Activated CD8-positive, alpha-beta T cell treated with anti-CD3 and anti-CD28 coated beads, Interleukin-2, amount 10 ng/mL, durations not matched to agents 7 days and 5 days (primary cell): ENCODE measurements at regions of chrX and their contacts with region 1.

Region 1: GRCh38 chrX:63761639-63762038 is 23.4 kb downstream of the ARHGEF9 start:
- DNase-seq: no peak
- ATAC-seq: peak; percentile 36
- H3K4me3 Mint-ChIP-seq: no peak overlapping the region
- H3K27ac Mint-ChIP-seq: peak overlapping the region; percentile 52
- H3K4me1 Mint-ChIP-seq: peaks cover 20% of the 10 kb centered on the region
- H3K27me3 Mint-ChIP-seq: peaks cover 2% of the 10 kb centered on the region

Region 2: GRCh38 chrX:63635750-63636149 is 125.9 kb before region 1 on chrX:
- CTCF ChIA-PET with region 1: no interaction called
- POLR2A ChIA-PET with region 1: no interaction called
- DNase-seq: no peak
- ATAC-seq: no peak
- H3K4me3 Mint-ChIP-seq: no peak overlapping the region
- H3K27ac Mint-ChIP-seq: no peak overlapping the region
- H3K4me1 Mint-ChIP-seq: no peaks in the 10 kb centered on the region
- H3K27me3 Mint-ChIP-seq: no peaks in the 10 kb centered on the region

Region 3: DNA sequence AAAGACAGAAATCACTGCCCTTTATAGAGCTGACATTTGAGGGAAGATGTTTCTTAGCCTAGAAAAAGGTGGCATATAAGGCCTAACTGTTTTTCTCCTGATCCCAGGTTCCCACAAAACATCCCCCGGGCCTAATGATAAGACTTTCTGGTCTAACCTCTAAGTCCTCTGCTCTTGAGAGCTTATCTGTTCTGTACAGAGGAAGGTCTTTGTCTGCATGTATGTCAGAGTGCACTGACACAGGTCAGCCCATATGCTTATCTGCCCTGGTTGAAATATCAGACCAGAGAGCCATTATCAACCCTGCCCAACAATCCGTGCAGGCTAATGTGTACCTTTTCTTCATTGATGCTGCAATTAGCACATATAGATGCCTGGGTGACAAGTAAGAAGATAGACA is 52.8 kb before region 1 on chrX:
- CTCF ChIA-PET with region 1: no interaction called
- POLR2A ChIA-PET with region 1: no interaction called
- DNase-seq: no peak
- ATAC-seq: no peak
- H3K4me3 Mint-ChIP-seq: no peak overlapping the region
- H3K27ac Mint-ChIP-seq: no peak overlapping the region
- H3K4me1 Mint-ChIP-seq: peaks cover 3% of the 10 kb centered on the region
- H3K27me3 Mint-ChIP-seq: no peaks in the 10 kb centered on the region

Region 4: DNA sequence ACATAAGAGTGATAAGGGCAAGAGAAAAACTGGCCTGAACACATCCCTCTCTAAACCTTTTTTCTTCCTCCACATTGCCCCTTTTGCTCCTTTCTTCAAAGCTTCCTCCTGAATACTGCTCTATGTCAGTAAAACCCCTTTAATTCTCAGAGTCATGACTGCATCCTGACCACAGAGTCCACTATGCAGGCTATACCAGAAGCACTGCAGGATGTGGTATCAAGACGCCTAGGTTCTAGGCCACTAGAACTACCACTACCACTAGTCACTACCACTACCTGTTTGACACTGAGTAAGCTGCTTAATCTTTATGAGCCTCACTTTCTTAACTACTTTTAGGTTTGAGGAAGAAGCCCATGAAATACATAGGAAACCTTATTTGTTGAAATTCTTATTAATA is 15.4 kb before region 1 on chrX:
- CTCF ChIA-PET with region 1: interaction called, 16 read pairs
- POLR2A ChIA-PET with region 1: interaction called, 3 read pairs
- DNase-seq: peak; percentile 76
- ATAC-seq: peak; percentile 97
- H3K4me3 Mint-ChIP-seq: peak overlapping the region; percentile 64
- H3K27ac Mint-ChIP-seq: peak overlapping the region; percentile 94
- H3K4me1 Mint-ChIP-seq: peaks cover 89% of the 10 kb centered on the region
- H3K27me3 Mint-ChIP-seq: no peaks in the 10 kb centered on the region